ENCODE measurements at regions of chr7 and their contacts with region 1.

Region 1: GRCh38 chr7:136293272-136293671 is 316.1 kb upstream of the MTPN start:
- DNase-seq: no peak
- H3K4me3 ChIP-seq: no peak overlapping the region
- CTCF ChIP-seq: no peak

Region 2: GRCh38 chr7:135562743-135563142 is 730.5 kb before region 1 on chr7:
- in situ Hi-C with region 1: no loop called
- DNase-seq: no peak
- H3K4me3 ChIP-seq: no peak overlapping the region
- CTCF ChIP-seq: no peak

Region 3: GRCh38 chr7:136228171-136228570 is 65.1 kb before region 1 on chr7:
- in situ Hi-C with region 1: no loop called
- DNase-seq: no peak
- H3K4me3 ChIP-seq: no peak overlapping the region
- CTCF ChIP-seq: no peak

Region 4: GRCh38 chr7:136251826-136252225 is 41.4 kb before region 1 on chr7:
- in situ Hi-C with region 1: loop called (anchors 5 kb)
- DNase-seq: no peak
- H3K4me3 ChIP-seq: no peak overlapping the region
- CTCF ChIP-seq: no peak

Region 5: GRCh38 chr7:136348542-136349192 is 55.4 kb after region 1 on chr7:
- in situ Hi-C with region 1: no loop called
- DNase-seq: no peak
- H3K4me3 ChIP-seq: no peak overlapping the region
- CTCF ChIP-seq: no peak

Measured in astrocyte of the cerebellum (primary cell).